Mammary epithelial cell (primary cell): ENCODE measurements at regions of chr10 and their contacts with region 1.

Region 1: DNA sequence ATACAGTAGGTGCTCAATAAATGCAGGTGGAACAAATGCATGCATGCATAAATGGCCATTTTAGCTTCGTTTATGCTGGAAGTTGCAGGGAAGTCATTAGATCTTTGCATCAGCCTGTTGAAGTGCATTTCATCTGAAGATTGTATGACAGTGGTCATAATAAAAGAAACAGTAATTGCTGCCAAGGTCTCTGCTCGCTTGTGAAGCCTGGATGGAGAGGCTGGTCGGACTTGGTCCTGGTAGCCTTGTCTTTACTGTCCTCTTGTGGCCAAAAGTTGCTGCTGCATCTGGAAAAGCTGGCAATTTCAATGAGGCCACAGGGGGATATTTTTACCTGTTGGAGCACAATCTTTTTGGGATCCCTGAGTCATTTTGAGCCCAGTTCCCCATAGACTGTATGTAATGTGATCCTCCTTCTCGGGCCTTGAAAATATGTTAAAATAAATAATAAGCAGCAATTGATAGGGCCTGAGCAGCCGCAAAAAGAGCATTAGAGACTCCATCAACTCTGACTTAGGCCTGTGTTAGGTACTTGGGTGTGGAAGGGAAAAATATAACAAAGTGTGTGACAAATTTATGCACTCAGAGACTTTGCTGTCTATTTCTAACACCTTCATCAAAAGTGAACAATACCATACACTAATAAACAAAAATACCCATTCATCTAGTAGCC is 31.6 kb upstream of the HABP2 start:
- DNase-seq: peak; percentile 48
- H3K4me3 ChIP-seq: no peak overlapping the region
- H3K27ac ChIP-seq: no peak overlapping the region
- H3K4me1 ChIP-seq: no peaks in the 10 kb centered on the region
- H3K27me3 ChIP-seq: no peaks in the 10 kb centered on the region
- CTCF ChIP-seq: peak; percentile 100

Region 2: DNA sequence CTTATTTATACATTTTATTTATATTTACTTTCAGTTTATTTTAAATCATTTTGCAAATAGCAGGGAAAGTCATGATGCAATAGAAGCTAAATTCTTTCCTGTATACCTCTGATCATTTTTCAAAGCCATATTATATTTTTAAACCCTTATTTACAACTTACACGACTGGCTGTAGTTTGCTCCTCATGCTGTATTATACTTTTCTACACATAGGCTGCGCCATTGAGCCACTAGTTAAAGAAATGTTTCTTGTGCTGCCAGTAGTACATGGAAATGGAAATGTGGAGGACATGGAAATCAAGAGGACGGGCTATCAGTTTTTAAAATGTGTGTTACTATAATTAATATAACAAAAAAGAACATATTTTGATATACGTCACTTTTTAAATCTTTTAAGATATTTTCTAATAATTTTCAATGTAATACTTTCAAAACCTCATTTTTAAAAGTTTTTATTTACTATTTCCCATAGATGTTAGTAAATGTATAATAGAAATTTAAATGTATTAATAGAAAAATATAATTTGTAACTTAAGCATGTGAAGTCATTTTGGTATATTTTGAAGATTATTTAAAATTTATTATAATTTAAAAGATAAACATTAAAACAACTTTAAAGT is 955.7 kb before region 1 on chr10:
- CTCF ChIA-PET with region 1: no interaction called
- dilution Hi-C with region 1: no loop called
- in situ Hi-C with region 1: no loop called
- intact Hi-C with region 1: loop called (anchors 5 kb)
- DNase-seq: peak; percentile 53
- H3K4me3 ChIP-seq: no peak overlapping the region
- H3K27ac ChIP-seq: no peak overlapping the region
- H3K4me1 ChIP-seq: no peaks in the 10 kb centered on the region
- H3K27me3 ChIP-seq: no peaks in the 10 kb centered on the region
- CTCF ChIP-seq: peak; percentile 77 to 82

Region 3: GRCh38 chr10:113333313-113333712 is 187.9 kb before region 1 on chr10:
- CTCF ChIA-PET with region 1: no interaction called
- dilution Hi-C with region 1: no loop called
- in situ Hi-C with region 1: no loop called
- intact Hi-C with region 1: loop called (anchors 1 kb)
- DNase-seq: no peak
- H3K4me3 ChIP-seq: no peak overlapping the region
- H3K27ac ChIP-seq: no peak overlapping the region
- H3K4me1 ChIP-seq: no peaks in the 10 kb centered on the region
- H3K27me3 ChIP-seq: no peaks in the 10 kb centered on the region
- CTCF ChIP-seq: peak in 1 of 2 donors; percentile 18

Region 4: GRCh38 chr10:113441220-113441619 is 80.0 kb before region 1 on chr10:
- CTCF ChIA-PET with region 1: no interaction called
- dilution Hi-C with region 1: no loop called
- in situ Hi-C with region 1: no loop called
- intact Hi-C with region 1: loop called (anchors 1 kb)
- DNase-seq: no peak
- H3K4me3 ChIP-seq: no peak overlapping the region
- H3K27ac ChIP-seq: no peak overlapping the region
- H3K4me1 ChIP-seq: no peaks in the 10 kb centered on the region
- H3K27me3 ChIP-seq: peaks cover 3% of the 10 kb centered on the region
- CTCF ChIP-seq: peak; percentile 5 to 31

Region 5: GRCh38 chr10:113563306-113564088 is 42.2 kb after region 1 on chr10:
- CTCF ChIA-PET with region 1: no interaction called
- dilution Hi-C with region 1: no loop called
- in situ Hi-C with region 1: no loop called
- intact Hi-C with region 1: loop called (anchors 1 kb)
- DNase-seq: peak; percentile 48
- H3K4me3 ChIP-seq: peak overlapping the region; percentile 29 to 43 (median 41)
- H3K27ac ChIP-seq: no peak overlapping the region
- H3K4me1 ChIP-seq: peaks cover 3% of the 10 kb centered on the region
- H3K27me3 ChIP-seq: no peaks in the 10 kb centered on the region
- CTCF ChIP-seq: peak; percentile 98